ENCODE measurements at regions of chr18 and their contacts with region 1.

Region 1: DNA sequence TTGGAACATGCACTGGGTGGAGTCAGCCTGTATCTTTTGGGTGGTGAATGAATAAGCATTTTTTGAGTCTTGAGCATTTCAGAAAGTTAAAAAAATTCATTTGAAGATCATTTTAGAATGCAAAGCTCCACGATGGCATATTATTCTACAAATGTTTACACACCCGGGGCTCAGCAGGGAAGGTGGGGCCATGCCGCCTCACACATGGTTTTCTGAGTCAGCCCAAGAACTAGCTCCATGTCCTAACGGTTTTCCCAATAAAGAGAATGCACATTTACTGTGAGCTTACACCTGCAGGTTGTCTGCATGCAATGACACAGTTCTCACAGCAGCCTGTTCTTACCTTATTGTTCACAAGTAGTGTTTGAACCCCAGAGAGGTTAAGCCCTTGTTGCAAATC is 670.3 kb downstream of the GALR1 start:
- DNase-seq: no peak
- H3K4me3 ChIP-seq: no peak overlapping the region
- H3K27ac ChIP-seq: no peak overlapping the region
- H3K4me1 ChIP-seq: no peaks in the 10 kb centered on the region
- H3K27me3 ChIP-seq: no peaks in the 10 kb centered on the region
- CTCF ChIP-seq: no peak
- POLR2A ChIP-seq: no peak

Region 2: DNA sequence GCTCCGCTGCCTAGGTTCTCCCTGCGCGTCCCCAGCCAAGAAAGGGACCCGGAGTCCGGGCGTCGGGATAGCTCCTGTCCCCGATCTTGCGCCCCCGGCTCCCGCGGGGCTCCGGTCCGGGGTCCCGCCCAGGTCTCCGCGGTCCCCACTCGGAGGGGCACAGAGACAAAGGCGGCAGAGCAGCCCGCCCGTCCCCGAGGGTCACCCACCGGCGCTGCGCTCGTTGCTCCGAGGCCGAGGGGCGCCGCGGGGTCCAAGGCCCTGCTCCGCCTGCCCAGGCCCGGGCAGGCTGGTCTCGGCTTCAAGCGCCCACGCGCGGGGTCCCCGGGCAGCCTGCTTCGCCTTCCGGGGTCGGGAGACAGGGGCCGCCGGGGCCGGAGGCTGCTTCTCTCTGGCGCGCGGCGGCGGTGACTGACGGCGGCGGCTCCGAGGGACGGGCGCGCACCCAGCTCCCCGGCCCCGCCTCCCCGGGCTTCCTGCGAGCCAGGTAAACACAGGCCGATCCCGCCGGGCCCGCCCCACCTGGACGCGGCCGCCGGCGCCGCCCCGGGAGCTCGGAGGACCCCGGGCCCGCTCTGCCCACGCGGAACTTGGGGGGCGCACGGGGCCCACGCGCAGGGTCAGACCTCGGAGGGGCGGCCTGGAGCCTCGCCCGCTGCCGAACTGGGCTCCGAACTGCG is 787.4 kb before region 1 on chr18 and contains the start of gene MBP:
- intact Hi-C with region 1: loop called (anchors 5 kb)
- DNase-seq: peak; percentile 75
- H3K4me3 ChIP-seq: peak within 1 kb of the TSS; percentile 89 to 98 (median 93)
- H3K27ac ChIP-seq: peak within 1 kb of the TSS; percentile 96
- H3K4me1 ChIP-seq: peaks cover 0 to 4% of the 10 kb centered on the region in 2 donors
- H3K27me3 ChIP-seq: no peaks in the 10 kb centered on the region
- CTCF ChIP-seq: no peak
- POLR2A ChIP-seq: no peak
- total RNA-seq, gene MBP: 27.2 to 46.2 (median 32.4) TPM

Region 3: GRCh38 chr18:77894060-77894459 is 25.9 kb before region 1 on chr18:
- intact Hi-C with region 1: loop called (anchors 5 kb)
- DNase-seq: no peak
- H3K4me3 ChIP-seq: no peak overlapping the region
- H3K27ac ChIP-seq: no peak overlapping the region
- H3K4me1 ChIP-seq: no peaks in the 10 kb centered on the region
- H3K27me3 ChIP-seq: peaks cover 0 to 7% of the 10 kb centered on the region in 2 donors
- CTCF ChIP-seq: no peak
- POLR2A ChIP-seq: no peak

Region 4: GRCh38 chr18:77970814-77971213 is 50.9 kb after region 1 on chr18:
- intact Hi-C with region 1: no loop called
- DNase-seq: no peak
- H3K4me3 ChIP-seq: no peak overlapping the region
- H3K27ac ChIP-seq: no peak overlapping the region
- H3K4me1 ChIP-seq: no peaks in the 10 kb centered on the region
- H3K27me3 ChIP-seq: no peaks in the 10 kb centered on the region
- CTCF ChIP-seq: no peak
- POLR2A ChIP-seq: no peak